ENCODE measurements at regions of chr5 and their contacts with region 1.

Region 1: DNA sequence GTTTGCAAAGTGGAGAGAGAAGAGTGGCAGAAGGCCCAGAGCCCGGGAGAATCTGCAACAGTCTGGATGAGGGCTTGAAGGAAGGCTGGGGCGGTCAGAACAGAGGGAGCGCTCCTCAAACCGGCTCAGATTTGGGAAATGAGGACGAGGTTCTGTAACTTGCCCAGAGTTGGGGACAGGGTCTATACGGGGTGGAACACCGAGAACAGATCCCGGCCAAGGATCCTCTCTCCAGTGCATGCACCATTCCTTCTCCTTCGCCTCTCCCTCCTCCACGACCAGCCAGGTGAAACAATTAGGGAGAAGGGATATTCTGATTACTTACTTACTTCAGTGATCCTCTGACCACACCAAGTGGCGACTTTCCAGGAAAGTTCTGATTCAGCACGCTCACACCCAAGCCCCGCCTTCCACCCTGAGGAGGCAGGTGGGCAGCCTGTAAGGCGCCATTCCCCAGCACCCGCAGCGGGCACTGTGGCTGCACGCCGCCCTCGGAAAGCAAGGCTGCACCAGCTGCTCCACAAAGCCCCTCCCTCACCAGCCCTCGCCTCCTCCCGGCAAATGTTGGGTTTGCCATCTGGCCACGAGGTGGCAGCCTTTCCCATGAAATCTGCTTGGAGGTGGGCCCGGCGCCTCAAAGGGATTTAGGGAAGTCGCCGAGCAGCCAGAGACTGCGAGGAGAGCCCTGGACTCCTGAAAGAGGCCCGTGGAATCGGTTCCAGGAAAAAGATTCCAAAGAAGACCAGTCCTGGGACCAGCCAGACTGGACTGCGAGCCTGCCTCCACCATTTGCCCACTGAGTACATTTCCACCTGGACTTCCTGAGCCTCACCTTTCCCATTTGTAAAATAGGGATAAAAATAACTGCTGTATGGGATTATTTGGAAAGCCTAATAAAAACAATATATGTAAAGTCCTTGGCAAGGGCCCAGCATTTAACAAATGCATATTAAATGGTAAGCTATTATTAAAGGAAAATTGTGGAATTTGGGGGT is 22.2 kb upstream of the WWC1 start:
- DNase-seq: peak; percentile 88
- H3K4me3 ChIP-seq: peak overlapping the region; percentile 10 to 54 (median 42)
- H3K27ac ChIP-seq: no peak overlapping the region
- H3K4me1 ChIP-seq: peaks cover 14% of the 10 kb centered on the region
- H3K27me3 ChIP-seq: no peaks in the 10 kb centered on the region
- CTCF ChIP-seq: peak; percentile 73 to 90

Region 2: DNA sequence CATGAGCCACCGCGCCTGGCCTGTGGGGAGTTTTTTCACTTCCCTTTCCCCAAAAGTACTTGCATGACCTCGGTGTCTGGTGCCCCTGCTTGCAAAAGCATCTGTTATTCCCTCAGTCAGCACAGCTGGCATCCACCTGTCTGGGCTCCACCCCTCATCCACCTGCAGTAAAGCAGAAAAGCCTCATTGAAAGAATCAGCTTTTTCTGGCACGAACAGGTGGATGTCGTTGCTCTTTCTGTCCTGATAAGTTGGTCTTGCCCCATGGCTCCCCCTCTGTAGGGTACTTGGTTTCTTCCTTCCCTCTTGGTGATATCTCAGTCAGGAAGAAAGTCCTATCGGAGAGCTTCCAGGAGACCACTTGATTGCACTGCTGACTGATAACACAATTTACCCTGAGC is 59.6 kb after region 1 on chr5:
- CTCF ChIA-PET with region 1: no interaction called
- dilution Hi-C with region 1: no loop called
- in situ Hi-C with region 1: no loop called
- intact Hi-C with region 1: loop called (anchors 1 kb)
- DNase-seq: no peak
- H3K4me3 ChIP-seq: no peak overlapping the region
- H3K27ac ChIP-seq: no peak overlapping the region
- H3K4me1 ChIP-seq: peaks cover 31% of the 10 kb centered on the region
- H3K27me3 ChIP-seq: no peaks in the 10 kb centered on the region
- CTCF ChIP-seq: no peak

Region 3: GRCh38 chr5:168365581-168366081 is 96.4 kb after region 1 on chr5:
- CTCF ChIA-PET with region 1: no interaction called
- dilution Hi-C with region 1: no loop called
- in situ Hi-C with region 1: no loop called
- intact Hi-C with region 1: loop called (anchors 1 kb)
- DNase-seq: peak; percentile 85
- H3K4me3 ChIP-seq: peak overlapping the region in 1 of 3 experiments; percentile 20
- H3K27ac ChIP-seq: peak overlapping the region; percentile 36
- H3K4me1 ChIP-seq: peaks cover 37% of the 10 kb centered on the region
- H3K27me3 ChIP-seq: no peaks in the 10 kb centered on the region
- CTCF ChIP-seq: peak; percentile 63 to 81

Region 4: DNA sequence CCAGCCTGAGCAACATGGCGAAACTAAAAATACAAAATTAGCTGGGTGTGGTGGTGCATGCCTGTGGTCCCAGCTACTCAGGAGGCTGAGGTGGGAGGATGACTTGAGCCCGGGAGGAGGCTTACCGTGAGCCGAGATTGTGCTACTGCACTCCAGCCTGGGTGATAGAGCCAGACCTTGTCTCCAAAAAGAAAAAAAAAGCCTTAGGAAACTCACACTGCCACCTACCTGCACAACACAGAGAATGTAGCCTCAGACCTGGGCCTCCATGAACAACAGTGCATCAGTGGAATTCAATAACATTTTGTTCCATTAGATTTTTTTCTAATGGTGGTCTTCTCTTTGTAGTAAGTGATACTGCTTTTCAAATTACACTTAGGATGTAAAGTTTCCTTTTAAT is 153.2 kb after region 1 on chr5:
- CTCF ChIA-PET with region 1: no interaction called
- dilution Hi-C with region 1: no loop called
- in situ Hi-C with region 1: loop called (anchors 10 kb)
- intact Hi-C with region 1: loop called (anchors 1 kb)
- DNase-seq: no peak
- H3K4me3 ChIP-seq: no peak overlapping the region
- H3K27ac ChIP-seq: no peak overlapping the region
- H3K4me1 ChIP-seq: no peaks in the 10 kb centered on the region
- H3K27me3 ChIP-seq: no peaks in the 10 kb centered on the region
- CTCF ChIP-seq: peak; percentile 22 to 56

Region 5: GRCh38 chr5:168472329-168472728 is 203.1 kb after region 1 on chr5:
- CTCF ChIA-PET with region 1: interaction called, 4 read pairs
- dilution Hi-C with region 1: no loop called
- in situ Hi-C with region 1: no loop called
- intact Hi-C with region 1: loop called (anchors 1 kb)
- DNase-seq: peak; percentile 84
- H3K4me3 ChIP-seq: no peak overlapping the region
- H3K27ac ChIP-seq: no peak overlapping the region
- H3K4me1 ChIP-seq: peaks cover 16% of the 10 kb centered on the region
- H3K27me3 ChIP-seq: no peaks in the 10 kb centered on the region
- CTCF ChIP-seq: peak; percentile 53 to 59

Region 6: GRCh38 chr5:168654211-168654721 is 385.0 kb after region 1 on chr5:
- CTCF ChIA-PET with region 1: no interaction called
- dilution Hi-C with region 1: no loop called
- in situ Hi-C with region 1: no loop called
- intact Hi-C with region 1: no loop called
- DNase-seq: no peak
- H3K4me3 ChIP-seq: no peak overlapping the region
- H3K27ac ChIP-seq: no peak overlapping the region
- H3K4me1 ChIP-seq: peaks cover 56% of the 10 kb centered on the region
- H3K27me3 ChIP-seq: no peaks in the 10 kb centered on the region
- CTCF ChIP-seq: no peak

Region 7: DNA sequence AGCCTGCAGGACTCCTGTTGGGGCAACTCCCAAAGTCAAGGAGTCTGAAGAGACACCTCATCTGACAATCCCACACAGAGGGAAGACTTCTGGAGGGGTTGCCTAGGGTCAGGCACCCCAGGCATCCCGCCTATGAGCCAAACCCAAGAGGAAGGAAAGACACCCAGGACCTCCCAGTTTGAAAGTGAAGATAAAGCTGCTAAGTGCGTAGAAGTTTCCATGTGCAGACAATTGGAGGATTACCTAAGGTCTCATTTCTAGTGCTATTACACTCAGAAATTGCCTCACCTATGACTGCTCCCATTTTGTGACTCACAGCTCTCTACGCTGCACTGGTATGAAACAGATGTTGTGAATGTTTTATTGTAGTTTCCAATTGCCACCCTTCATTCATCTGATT is 708.8 kb after region 1 on chr5:
- CTCF ChIA-PET with region 1: no interaction called
- dilution Hi-C with region 1: no loop called
- in situ Hi-C with region 1: no loop called
- intact Hi-C with region 1: loop called (anchors 1 kb)
- DNase-seq: peak; percentile 95
- H3K4me3 ChIP-seq: no peak overlapping the region
- H3K27ac ChIP-seq: peak overlapping the region; percentile 60
- H3K4me1 ChIP-seq: peaks cover 13% of the 10 kb centered on the region
- H3K27me3 ChIP-seq: no peaks in the 10 kb centered on the region
- CTCF ChIP-seq: no peak

Measured in mammary epithelial cell (primary cell).